HepG2 (cell line): ENCODE measurements at regions of chr14 and their contacts with region 1.

Region 1: DNA sequence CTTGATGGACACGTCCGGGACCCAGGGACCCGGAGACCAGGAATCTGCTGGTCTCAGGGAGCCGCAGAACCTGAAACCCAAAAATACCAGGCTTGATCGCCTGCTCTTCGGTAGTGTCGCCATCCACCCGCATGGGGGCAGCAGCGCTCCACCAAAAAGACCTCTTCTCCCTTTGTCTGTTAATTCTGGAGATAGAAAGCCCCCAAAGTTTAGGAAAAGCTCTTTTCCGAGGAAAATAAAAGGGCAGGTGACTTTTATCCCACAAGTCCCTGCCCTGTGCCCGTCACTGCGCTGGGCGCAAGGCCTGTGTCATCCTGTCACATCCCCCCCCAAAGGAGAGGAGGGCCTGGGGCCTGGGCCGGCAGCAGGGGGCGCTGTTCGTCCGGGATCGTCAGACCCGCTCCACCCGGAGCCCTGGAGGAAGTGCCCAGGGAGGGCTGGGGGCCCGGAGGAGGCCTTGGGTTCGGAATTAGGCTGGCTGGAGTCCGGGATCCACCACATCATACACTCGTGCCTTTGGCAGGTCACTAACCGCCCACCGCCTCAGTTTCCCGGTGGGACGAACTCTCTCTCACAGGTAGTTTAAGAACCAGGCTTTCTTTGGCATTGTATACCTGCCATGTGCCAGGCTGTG is 31.9 kb downstream of the DAD1 start:
- DNase-seq: peak; percentile 74
- ATAC-seq: peak; percentile 70
- H3K4me3 ChIP-seq: peak overlapping the region; percentile 27 to 66 (median 28); a peak in 4 of 6 replicates
- H3K27ac ChIP-seq: no peak overlapping the region
- H3K4me1 ChIP-seq: peaks cover 63% of the 10 kb centered on the region
- H3K27me3 ChIP-seq: peaks cover 9 to 42% of the 10 kb centered on the region in 2 experiments; a peak in 4 of 5 replicates
- CTCF ChIP-seq: peak; percentile 98
- EP300 ChIP-seq: peak in 1 of 2 experiments; percentile 51; a peak in 1 of 4 replicates
- POLR2A ChIP-seq: no peak
- RAD21 ChIP-seq: peak; percentile 100

Region 2: GRCh38 chr14:22536853-22537338 is 20.2 kb before region 1 on chr14:
- CTCF ChIA-PET with region 1: no interaction called
- POLR2A ChIA-PET with region 1: no interaction called
- in situ Hi-C with region 1: no loop called
- intact Hi-C with region 1: no loop called
- DNase-seq: no peak
- ATAC-seq: no peak
- H3K4me3 ChIP-seq: no peak overlapping the region
- H3K27ac ChIP-seq: no peak overlapping the region
- H3K4me1 ChIP-seq: no peaks in the 10 kb centered on the region
- H3K27me3 ChIP-seq: peaks cover 4 to 10% of the 10 kb centered on the region in 2 experiments; a peak in 3 of 5 replicates
- CTCF ChIP-seq: no peak
- EP300 ChIP-seq: no peak
- POLR2A ChIP-seq: no peak
- RAD21 ChIP-seq: no peak

Region 3: DNA sequence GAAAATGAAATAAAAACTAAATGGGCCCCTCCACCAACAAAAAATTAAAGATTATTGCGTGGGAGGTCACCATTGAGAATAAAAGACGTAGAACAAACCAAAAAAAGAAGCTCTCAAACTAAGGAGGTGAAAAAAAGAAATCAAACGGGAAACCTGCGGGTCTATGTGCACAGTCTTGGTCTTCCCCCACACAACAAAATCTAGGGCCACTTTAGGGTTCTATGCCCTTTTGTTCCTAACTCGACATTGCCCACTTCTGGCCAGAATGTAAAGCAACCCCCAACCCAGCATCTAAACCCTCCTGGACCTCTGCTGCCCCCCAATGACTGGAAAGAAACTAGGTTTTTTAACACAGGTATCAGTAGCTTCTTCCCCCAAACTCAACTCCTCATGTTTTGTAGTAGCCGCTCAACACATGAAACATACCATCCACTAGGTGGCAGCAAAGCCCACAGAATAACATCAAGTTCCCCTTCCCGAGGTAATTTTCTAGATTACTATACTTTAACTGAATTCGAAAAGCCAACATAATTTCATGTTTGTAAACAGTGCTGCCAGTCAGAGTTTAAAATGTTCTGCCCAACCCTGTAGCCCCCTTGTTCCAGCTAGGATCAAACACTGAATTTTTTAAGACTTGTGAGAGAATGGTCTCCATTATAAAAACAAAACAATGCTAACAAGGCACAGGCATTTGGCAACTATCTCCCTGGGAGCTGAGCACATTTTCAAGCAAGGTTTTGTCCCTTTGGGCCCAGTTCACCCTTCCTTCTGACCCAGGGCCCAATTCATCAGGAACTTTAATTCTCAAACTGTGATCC is 13.2 kb after region 1 on chr14:
- CTCF ChIA-PET with region 1: interaction called, 142 read pairs
- POLR2A ChIA-PET with region 1: interaction called, 7 read pairs
- in situ Hi-C with region 1: no loop called
- intact Hi-C with region 1: loop called (anchors 1 kb)
- DNase-seq: peak; percentile 98
- ATAC-seq: peak; percentile 86
- H3K4me3 ChIP-seq: no peak overlapping the region
- H3K27ac ChIP-seq: peak overlapping the region; percentile 12
- H3K4me1 ChIP-seq: peaks cover 29% of the 10 kb centered on the region
- H3K27me3 ChIP-seq: no peaks in the 10 kb centered on the region
- CTCF ChIP-seq: peak; percentile 97
- EP300 ChIP-seq: no peak; a peak in 1 of 4 replicates
- POLR2A ChIP-seq: no peak
- RAD21 ChIP-seq: peak; percentile 96

Region 4: GRCh38 chr14:22653012-22653621 is 96.0 kb after region 1 on chr14:
- CTCF ChIA-PET with region 1: interaction called, 175 read pairs
- POLR2A ChIA-PET with region 1: interaction called, 3 read pairs
- in situ Hi-C with region 1: loop called (anchors 5 kb)
- intact Hi-C with region 1: loop called (anchors 1 kb)
- DNase-seq: peak; percentile 86
- ATAC-seq: peak; percentile 98
- H3K4me3 ChIP-seq: no peak overlapping the region
- H3K27ac ChIP-seq: no peak overlapping the region
- H3K4me1 ChIP-seq: 0 out of 2 replicates have a peak, but pooled peaks cover 5% of the 10 kb centered on the region
- H3K27me3 ChIP-seq: peaks cover 3 to 36% of the 10 kb centered on the region in 2 experiments; a peak in 4 of 5 replicates
- CTCF ChIP-seq: peak; percentile 99
- EP300 ChIP-seq: no peak; a peak in 1 of 4 replicates
- POLR2A ChIP-seq: no peak
- RAD21 ChIP-seq: peak; percentile 94

Region 5: GRCh38 chr14:22822571-22823098 is 265.5 kb after region 1 on chr14:
- CTCF ChIA-PET with region 1: interaction called, 14 read pairs
- POLR2A ChIA-PET with region 1: interaction called, 3 read pairs
- in situ Hi-C with region 1: no loop called
- intact Hi-C with region 1: loop called (anchors 2 kb)
- DNase-seq: peak; percentile 78
- ATAC-seq: peak; percentile 70
- H3K4me3 ChIP-seq: peak overlapping the region; percentile 12 to 53 (median 27); a peak in 5 of 6 replicates
- H3K27ac ChIP-seq: no peak overlapping the region
- H3K4me1 ChIP-seq: peaks cover 67% of the 10 kb centered on the region
- H3K27me3 ChIP-seq: 0 out of 5 replicates have a peak, but pooled peaks cover 0 to 3% of the 10 kb centered on the region in 2 experiments
- CTCF ChIP-seq: peak; percentile 93
- EP300 ChIP-seq: 0 out of 4 replicates have a peak, but pooled peaks of 1 of the 2 experiments have one; percentile 19
- POLR2A ChIP-seq: no peak
- RAD21 ChIP-seq: peak; percentile 97

Region 6: GRCh38 chr14:22900081-22900799 is 343.1 kb after region 1 on chr14:
- CTCF ChIA-PET with region 1: interaction called, 67 read pairs
- POLR2A ChIA-PET with region 1: no interaction called
- in situ Hi-C with region 1: no loop called
- intact Hi-C with region 1: loop called (anchors 1 kb)
- DNase-seq: peak; percentile 83
- ATAC-seq: peak; percentile 39
- H3K4me3 ChIP-seq: no peak overlapping the region
- H3K27ac ChIP-seq: no peak overlapping the region
- H3K4me1 ChIP-seq: peaks cover 45% of the 10 kb centered on the region
- H3K27me3 ChIP-seq: peaks cover 4 to 6% of the 10 kb centered on the region in 2 experiments; a peak in 2 of 5 replicates
- CTCF ChIP-seq: peak; percentile 87
- EP300 ChIP-seq: no peak
- POLR2A ChIP-seq: no peak
- RAD21 ChIP-seq: peak; percentile 56; the same call in 1 of the 2 replicates

Region 7: GRCh38 chr14:23057757-23058653 is 500.9 kb after region 1 on chr14:
- CTCF ChIA-PET with region 1: interaction called, 37 read pairs
- POLR2A ChIA-PET with region 1: no interaction called
- in situ Hi-C with region 1: loop called (anchors 5 kb)
- intact Hi-C with region 1: loop called (anchors 1 kb)
- DNase-seq: peak; percentile 92
- ATAC-seq: peak; percentile 71
- H3K4me3 ChIP-seq: peak overlapping the region; percentile 55 to 88 (median 64)
- H3K27ac ChIP-seq: no peak overlapping the region
- H3K4me1 ChIP-seq: peaks cover 29% of the 10 kb centered on the region
- H3K27me3 ChIP-seq: peaks cover 0 to 6% of the 10 kb centered on the region in 2 experiments; a peak in 1 of 5 replicates
- CTCF ChIP-seq: peak; percentile 100
- EP300 ChIP-seq: peak in 1 of 2 experiments; percentile 66; a peak in 1 of 4 replicates
- POLR2A ChIP-seq: peak in 1 of 2 experiments; percentile 39; a peak in 1 of 4 replicates
- RAD21 ChIP-seq: peak; percentile 98